Psoas muscle (tissue), 8 donors: ENCODE measurements at regions of chr12 and their contacts with region 1.

Region 1: GRCh38 chr12:123983822-123984485 is 10.9 kb downstream of the ZNF664 start:
- DNase-seq: no peak
- ATAC-seq: peak; percentile 58 to 91 (median 84)
- H3K4me3 ChIP-seq: no peak overlapping the region
- H3K27ac ChIP-seq: no peak overlapping the region
- H3K4me1 ChIP-seq: peaks cover 17% of the 10 kb centered on the region
- H3K27me3 ChIP-seq: no peaks in the 10 kb centered on the region
- CTCF ChIP-seq: peak; percentile 56

Region 2: DNA sequence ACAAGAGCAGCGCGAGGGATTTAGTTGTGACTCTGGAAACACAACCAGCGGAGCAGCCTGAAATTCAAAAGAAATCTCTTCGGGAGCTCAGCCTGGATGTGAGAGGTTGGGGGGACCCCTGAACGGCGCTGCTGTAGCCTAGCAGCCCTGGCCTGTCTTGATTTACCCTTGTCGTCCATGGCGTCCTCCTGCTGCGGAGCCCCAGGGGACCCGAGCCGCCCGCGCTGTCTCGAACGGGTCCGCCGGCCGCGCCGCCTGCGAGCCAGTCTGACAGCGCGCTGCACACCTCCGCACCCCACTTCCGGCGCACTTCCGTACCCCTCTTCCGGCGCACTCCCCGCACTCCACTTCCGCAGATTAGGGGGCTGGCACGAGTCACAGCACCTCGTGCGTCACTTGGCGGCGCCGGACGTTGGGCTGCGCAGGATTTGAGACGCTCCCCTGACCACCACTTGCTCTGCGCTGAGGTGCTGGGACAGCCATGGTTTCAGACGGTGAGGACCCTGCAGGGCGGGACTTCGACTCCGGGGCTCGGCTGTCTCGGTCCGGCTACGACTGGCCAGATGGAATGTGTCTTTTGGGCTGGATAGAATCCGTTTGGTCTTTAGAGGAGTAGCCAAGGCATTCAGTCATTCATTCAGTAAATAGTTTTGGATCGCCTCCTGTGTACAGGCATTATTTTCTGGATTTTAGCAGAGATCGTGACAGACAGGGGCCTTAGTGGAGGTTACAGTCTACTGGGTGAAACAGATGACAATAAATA is 350.4 kb before region 1 on chr12 and contains the starts of genes EIF2B1 and GTF2H3:
- intact Hi-C with region 1: loop called in 1 of 2 experiments (anchors 10 kb)
- DNase-seq: peak; percentile 96 to 98
- ATAC-seq: peak; percentile 99 to 100 (median 100)
- H3K4me3 ChIP-seq: peak within 1 kb of the TSS; percentile 88
- H3K27ac ChIP-seq: peak within 1 kb of the TSS; percentile 88
- H3K4me1 ChIP-seq: peaks cover 9% of the 10 kb centered on the region
- H3K27me3 ChIP-seq: no peaks in the 10 kb centered on the region
- CTCF ChIP-seq: no peak
- total RNA-seq, gene EIF2B1: 37.3 to 42.7 (median 40.1) TPM
- total RNA-seq, gene GTF2H3: 10.7 to 18.5 (median 16.9) TPM

Region 3: GRCh38 chr12:123713398-123713797 is 270.6 kb before region 1 on chr12:
- intact Hi-C with region 1: loop called in 1 of 2 experiments (anchors 5 kb)
- DNase-seq: no peak
- ATAC-seq: no peak
- H3K4me3 ChIP-seq: peak overlapping the region; percentile 99
- H3K27ac ChIP-seq: no peak overlapping the region
- H3K4me1 ChIP-seq: peaks cover 17% of the 10 kb centered on the region
- H3K27me3 ChIP-seq: no peaks in the 10 kb centered on the region
- CTCF ChIP-seq: no peak

Region 4: DNA sequence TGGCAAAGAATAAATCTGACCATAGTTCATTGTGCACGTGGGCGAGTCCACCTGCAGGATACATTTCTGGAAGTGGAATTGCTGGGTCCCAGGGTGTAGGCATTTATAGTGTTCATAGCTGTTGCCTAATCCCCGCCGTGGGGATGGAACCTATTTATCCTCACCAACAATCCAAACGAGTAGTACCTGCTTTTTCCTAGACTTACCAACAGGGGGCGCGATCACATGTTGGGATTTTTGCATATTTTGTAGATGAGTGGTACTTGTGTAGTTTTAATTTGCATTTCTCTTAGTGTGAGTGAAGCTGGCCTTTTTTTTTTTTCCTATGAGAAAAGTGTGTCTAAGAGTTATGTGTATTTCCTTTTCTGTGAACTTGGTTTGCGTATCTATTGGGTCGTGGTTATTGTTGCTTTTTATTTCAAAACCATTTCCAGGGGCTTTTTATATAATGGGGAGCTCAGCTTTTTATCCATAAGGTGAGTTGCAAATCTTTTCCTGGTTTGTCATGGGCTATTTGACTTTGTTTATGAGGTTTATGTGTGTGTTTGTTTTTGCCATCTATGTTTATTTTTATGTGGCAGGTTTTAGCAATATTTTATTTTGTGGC is 78.5 kb before region 1 on chr12:
- intact Hi-C with region 1: loop called (anchors 2 kb)
- DNase-seq: no peak
- ATAC-seq: peak in 2 of 4 donors; percentile 50 to 56
- H3K4me3 ChIP-seq: no peak overlapping the region
- H3K27ac ChIP-seq: no peak overlapping the region
- H3K4me1 ChIP-seq: no peaks in the 10 kb centered on the region
- H3K27me3 ChIP-seq: no peaks in the 10 kb centered on the region
- CTCF ChIP-seq: peak; percentile 68

Region 5: DNA sequence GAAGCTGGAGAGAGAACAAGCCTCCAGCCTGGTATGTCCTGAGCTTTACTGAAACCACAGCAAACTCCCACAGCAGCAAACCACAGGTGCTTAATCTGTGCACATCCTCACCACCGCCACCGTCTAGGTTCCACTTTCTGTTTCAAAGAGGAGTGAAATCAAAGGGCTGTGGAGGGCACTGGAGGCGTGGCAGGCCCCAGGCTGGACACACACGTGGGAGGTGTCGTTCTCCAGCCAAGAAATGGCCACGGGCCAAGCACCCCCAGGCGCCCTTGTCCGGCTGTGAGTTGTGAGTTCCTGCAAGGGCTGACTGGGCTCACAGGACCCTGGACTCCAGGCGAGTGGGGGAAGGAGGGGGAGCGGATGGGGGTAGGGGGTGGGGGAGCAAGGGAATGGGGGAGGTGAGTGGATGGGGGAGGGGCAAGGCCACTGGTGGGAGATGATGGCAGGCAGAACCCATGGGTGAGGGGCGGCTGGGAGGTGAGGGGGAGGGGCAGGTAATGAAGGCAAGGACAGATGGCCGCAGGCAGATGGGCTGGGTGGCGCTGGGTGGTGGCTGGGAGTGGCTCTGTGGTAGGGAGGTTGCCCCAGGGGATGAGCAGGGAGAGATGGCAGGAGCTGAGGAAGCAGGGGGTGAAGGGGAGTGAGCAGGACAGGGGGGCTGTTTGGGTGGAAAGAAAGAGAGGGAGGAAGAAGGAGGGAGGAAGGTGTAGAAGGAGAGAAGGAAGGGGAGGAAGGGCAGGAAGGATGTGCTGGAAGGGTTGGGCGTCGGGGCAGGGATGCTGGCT is 496.7 kb after region 1 on chr12:
- intact Hi-C with region 1: no loop called
- DNase-seq: peak; percentile 61 to 75
- ATAC-seq: peak in 3 of 4 donors; percentile 6 to 46 (median 38)
- H3K4me3 ChIP-seq: no peak overlapping the region
- H3K27ac ChIP-seq: peak overlapping the region; percentile 41
- H3K4me1 ChIP-seq: peaks cover 19% of the 10 kb centered on the region
- H3K27me3 ChIP-seq: no peaks in the 10 kb centered on the region
- CTCF ChIP-seq: no peak